Sigmoid colon (tissue), 7 donors: ENCODE measurements at regions of chr9 and their contacts with region 1.

Region 1: DNA sequence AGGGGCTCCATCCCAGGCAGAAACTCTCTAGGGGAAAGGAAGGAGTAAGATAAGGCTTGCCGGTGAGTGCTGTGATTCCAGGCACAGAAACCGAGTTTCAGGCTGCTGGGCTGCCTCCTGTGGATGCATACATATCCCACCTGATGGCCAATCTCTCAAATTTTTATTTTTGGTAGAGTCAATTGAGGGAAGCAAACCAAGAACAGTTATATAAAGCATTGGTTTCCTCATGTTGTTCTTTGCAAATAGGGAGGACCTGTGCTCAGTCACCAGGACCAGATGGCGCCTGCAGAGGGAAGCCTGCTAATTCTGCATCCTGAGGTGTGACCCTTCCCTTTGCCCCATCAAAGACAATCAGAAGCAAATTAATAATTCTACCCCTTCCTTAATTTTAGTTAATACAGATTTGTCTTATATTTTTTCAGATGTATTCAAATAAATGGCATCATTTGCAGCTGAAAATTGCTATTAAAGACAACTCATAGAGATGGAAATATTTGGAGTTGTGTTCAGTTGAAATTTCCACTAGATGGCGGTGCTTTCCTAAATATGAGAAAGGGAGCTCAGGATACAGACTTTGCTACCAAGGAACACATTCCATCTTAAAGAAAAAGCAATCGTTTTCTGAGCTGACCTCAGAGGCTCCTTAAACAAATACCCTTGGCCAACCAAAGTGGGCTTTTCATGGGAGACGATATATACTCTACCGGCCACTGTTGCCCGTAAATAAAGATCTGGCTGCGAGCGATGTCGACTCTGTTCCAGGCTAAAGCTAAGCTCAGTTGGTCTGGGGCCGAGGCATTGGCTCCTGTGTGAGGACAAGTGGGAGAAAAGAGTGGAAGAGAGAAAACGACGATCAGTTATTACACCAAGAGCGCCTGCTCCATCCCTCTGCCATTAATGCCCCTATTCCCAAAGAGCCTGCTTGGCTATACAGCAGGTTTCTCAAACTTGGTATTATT is 225.7 kb upstream of the KLF9 start:
- DNase-seq: no peak
- H3K4me3 ChIP-seq: no peak overlapping the region
- H3K27ac ChIP-seq: no peak overlapping the region
- H3K4me1 ChIP-seq: no peaks in the 10 kb centered on the region
- H3K27me3 ChIP-seq: no peaks in the 10 kb centered on the region
- CTCF ChIP-seq: peak; percentile 22 to 61 (median 46)
- EP300 ChIP-seq: no peak
- POLR2A ChIP-seq: no peak

Region 2: GRCh38 chr9:70784456-70784855 is 144.3 kb after region 1 on chr9:
- intact Hi-C with region 1: no loop called
- DNase-seq: no peak
- H3K4me3 ChIP-seq: no peak overlapping the region
- H3K27ac ChIP-seq: no peak overlapping the region
- H3K4me1 ChIP-seq: no peaks in the 10 kb centered on the region
- H3K27me3 ChIP-seq: no peaks in the 10 kb centered on the region
- CTCF ChIP-seq: no peak
- EP300 ChIP-seq: no peak
- POLR2A ChIP-seq: no peak

Region 3: DNA sequence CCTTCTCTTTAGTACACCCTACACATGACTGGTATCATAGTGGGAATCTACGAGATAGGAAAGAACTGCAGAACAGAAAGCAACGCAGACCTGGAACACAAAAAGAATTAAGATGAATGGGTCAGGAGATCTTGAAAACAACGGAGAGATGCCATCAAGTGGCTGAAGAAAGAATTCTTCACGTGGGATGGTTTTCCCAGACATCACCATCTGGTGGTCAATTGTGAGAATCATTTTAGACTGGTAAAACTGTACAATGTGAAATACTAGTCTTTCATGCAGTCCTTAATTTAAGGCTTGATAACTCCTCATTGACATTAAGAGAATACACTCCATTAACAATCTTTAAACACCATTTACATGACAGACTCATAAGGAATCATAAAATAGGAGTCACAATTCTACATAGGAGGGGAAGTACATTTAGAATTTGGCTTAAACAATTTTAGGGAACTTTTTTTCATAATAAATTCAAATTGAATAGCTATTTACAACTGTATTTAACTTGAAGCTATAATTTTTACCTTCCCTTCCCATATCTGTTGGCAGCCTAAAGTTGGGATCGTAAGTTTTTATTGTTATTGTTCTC is 609.7 kb after region 1 on chr9:
- intact Hi-C with region 1: loop called (anchors 5 kb)
- DNase-seq: no peak
- H3K4me3 ChIP-seq: no peak overlapping the region
- H3K27ac ChIP-seq: no peak overlapping the region
- H3K4me1 ChIP-seq: no peaks in the 10 kb centered on the region
- H3K27me3 ChIP-seq: no peaks in the 10 kb centered on the region
- CTCF ChIP-seq: peak in 3 of 4 experiments; percentile 47 to 59 (median 56)
- EP300 ChIP-seq: no peak
- POLR2A ChIP-seq: no peak